ENCODE measurements at regions of chr2 and their contacts with region 1.

Region 1: DNA sequence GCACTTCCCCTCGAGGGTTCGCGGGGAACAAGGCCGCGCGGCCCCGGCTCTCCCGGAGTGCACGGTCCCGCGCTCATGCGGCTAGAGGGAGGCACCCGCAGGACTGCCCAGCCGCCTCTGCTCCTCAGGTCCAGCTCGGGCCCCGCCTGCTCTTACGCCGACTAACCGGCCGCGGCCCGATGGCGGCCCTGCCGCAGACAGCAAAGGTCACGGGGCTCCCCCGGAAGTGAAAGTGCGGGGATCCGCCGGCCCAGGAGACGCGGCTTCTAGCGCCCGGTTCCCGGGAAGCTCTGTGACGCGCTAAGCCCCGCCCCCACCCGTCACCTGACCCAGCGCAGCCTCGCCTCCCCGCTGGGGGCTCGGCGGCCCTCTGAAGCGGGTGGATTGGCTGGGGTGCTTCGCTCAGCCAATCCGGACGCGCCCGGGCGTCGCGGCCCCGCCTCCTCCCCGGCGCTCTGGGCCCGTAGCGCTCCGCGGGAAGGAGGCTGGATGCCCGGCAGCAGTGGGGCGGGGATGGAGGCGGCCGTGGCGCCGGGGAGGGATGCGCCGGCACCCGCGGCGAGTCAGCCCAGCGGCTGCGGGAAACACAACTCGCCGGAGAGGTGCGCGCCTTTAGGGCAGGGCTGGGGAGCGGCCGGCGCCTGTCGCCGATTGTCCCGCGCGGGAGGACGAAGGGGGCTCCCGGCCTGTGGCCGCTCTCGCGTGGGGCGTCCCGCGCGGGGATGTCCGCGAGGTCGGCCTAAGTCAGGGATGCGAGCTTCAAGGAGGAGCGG is at the start of gene SCLY:
- DNase-seq: peak; percentile 90 to 99
- ATAC-seq: peak; percentile 95 to 99 (median 96)
- H3K4me3 ChIP-seq: peak within 1 kb of the TSS; percentile 86
- H3K4me3 Mint-ChIP-seq: peak within 1 kb of the TSS; percentile 89
- H3K27ac ChIP-seq: peak within 1 kb of the TSS; percentile 66
- H3K27ac Mint-ChIP-seq: peak within 1 kb of the TSS; percentile 84 to 93
- H3K4me1 ChIP-seq: peaks cover 16% of the 10 kb centered on the region
- H3K4me1 Mint-ChIP-seq: peaks cover 30 to 32% of the 10 kb centered on the region in 2 donors
- H3K27me3 ChIP-seq: no peaks in the 10 kb centered on the region
- H3K27me3 Mint-ChIP-seq: peaks cover 0 to 10% of the 10 kb centered on the region in 2 donors
- CTCF ChIP-seq: no peak
- total RNA-seq, gene SCLY: 16.3 to 24.6 (median 20.1) TPM

Region 2: GRCh38 chr2:237904801-237905599 is 155.7 kb before region 1 on chr2:
- intact Hi-C with region 1: loop called (anchors 10 kb)
- DNase-seq: no peak
- ATAC-seq: peak; percentile 28 to 51 (median 46)
- H3K4me3 ChIP-seq: no peak overlapping the region
- H3K4me3 Mint-ChIP-seq: peak overlapping the region; percentile 76
- H3K27ac ChIP-seq: peak overlapping the region; percentile 71
- H3K27ac Mint-ChIP-seq: peak overlapping the region; percentile 95 to 98
- H3K4me1 ChIP-seq: peaks cover 59% of the 10 kb centered on the region
- H3K4me1 Mint-ChIP-seq: peaks cover 51 to 53% of the 10 kb centered on the region in 2 donors
- H3K27me3 ChIP-seq: no peaks in the 10 kb centered on the region
- H3K27me3 Mint-ChIP-seq: no peaks in the 10 kb centered on the region
- CTCF ChIP-seq: no peak

Measured in natural killer cell (primary cell).